Activated T-helper 2 cell treated with anti-CD3 and anti-CD28 coated beads, Interferon-gamma antibody, Interleukin-2, Interleukin-4, amounts not matched to agents 10 μg/mL and 5 μg/mL and 100 μg/mL, durations not matched to agents 14 hours and 24 hours and 36 hours (primary cell): ENCODE measurements at regions of chr2 and their contacts with region 1.

Region 1: GRCh38 chr2:68925295-68925896 is 27.3 kb downstream of the GKN2 start:
- DNase-seq: peak; percentile 44
- H3K4me3 Mint-ChIP-seq: no peak overlapping the region
- H3K27ac Mint-ChIP-seq: no peak overlapping the region
- H3K4me1 Mint-ChIP-seq: peaks cover 6% of the 10 kb centered on the region
- H3K27me3 Mint-ChIP-seq: peaks cover 25% of the 10 kb centered on the region

Region 2: DNA sequence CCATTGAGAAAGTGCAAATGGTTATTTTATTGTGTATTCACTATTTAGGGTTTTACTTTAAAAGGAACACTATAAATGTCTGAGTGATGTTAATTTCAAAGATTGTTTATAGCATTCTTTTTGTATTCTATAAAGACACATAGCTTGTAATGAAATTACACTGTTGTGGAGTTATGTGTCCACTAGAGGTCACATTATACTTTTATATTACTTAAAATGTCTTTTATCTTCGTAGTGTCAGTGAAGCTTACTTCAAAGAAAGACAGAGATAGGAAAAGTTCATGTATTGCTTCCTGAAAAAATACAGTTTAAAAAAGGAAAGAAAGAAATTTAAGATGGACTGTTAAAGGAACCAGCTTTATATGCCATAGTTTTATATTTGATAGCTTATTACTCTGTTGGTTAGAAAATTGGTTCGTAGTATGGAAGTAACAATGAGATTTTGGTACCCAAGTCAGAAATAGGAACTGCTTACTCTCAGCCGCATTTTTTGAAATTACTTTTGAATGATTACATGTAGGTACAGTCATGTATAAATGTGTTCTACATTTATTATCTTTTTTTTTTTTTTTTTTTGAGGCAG is 437.5 kb before region 1 on chr2:
- intact Hi-C with region 1: loop called (anchors 1 kb)
- DNase-seq: no peak
- H3K4me3 Mint-ChIP-seq: no peak overlapping the region
- H3K27ac Mint-ChIP-seq: no peak overlapping the region
- H3K4me1 Mint-ChIP-seq: peaks cover 11% of the 10 kb centered on the region
- H3K27me3 Mint-ChIP-seq: no peaks in the 10 kb centered on the region

Region 3: GRCh38 chr2:68709421-68709911 is 215.9 kb before region 1 on chr2:
- intact Hi-C with region 1: loop called (anchors 1 kb)
- DNase-seq: no peak
- H3K4me3 Mint-ChIP-seq: no peak overlapping the region
- H3K27ac Mint-ChIP-seq: no peak overlapping the region
- H3K4me1 Mint-ChIP-seq: peaks cover 28% of the 10 kb centered on the region
- H3K27me3 Mint-ChIP-seq: peaks cover 14% of the 10 kb centered on the region

Region 4: GRCh38 chr2:69100220-69100723 is 174.9 kb after region 1 on chr2:
- intact Hi-C with region 1: no loop called
- DNase-seq: no peak
- H3K4me3 Mint-ChIP-seq: no peak overlapping the region
- H3K27ac Mint-ChIP-seq: no peak overlapping the region
- H3K4me1 Mint-ChIP-seq: no peaks in the 10 kb centered on the region
- H3K27me3 Mint-ChIP-seq: peaks cover 22% of the 10 kb centered on the region